Breast epithelium (tissue), 4 donors: ENCODE measurements at regions of chr12 and their contacts with region 1.

Region 1: GRCh38 chr12:17642340-17642650 is 447.7 kb downstream of the RERGL start:
- DNase-seq: no peak
- H3K4me3 ChIP-seq: no peak overlapping the region
- H3K27ac ChIP-seq: no peak overlapping the region
- H3K4me1 ChIP-seq: no peaks in the 10 kb centered on the region
- H3K27me3 ChIP-seq: no peaks in the 10 kb centered on the region
- CTCF ChIP-seq: no peak
- POLR2A ChIP-seq: no peak

Region 2: DNA sequence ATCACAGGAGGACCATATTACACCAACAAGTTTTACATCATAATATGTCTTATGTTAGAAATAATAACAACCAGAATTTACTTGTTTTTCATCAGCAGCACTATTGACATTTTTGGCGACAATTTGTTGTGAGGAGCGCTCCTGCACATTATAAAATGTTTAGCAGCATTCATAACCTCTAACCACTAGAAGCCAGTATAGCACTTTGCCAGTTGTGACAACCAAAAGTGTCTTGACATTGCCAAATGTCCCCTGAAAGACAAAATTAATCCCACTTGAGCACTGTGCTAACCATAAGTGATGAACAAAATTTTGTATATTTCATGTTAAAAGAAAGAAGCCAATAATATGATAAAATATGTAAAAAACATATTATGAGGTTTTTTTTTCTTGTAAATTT is 679.4 kb before region 1 on chr12:
- intact Hi-C with region 1: no loop called
- DNase-seq: no peak
- H3K4me3 ChIP-seq: no peak overlapping the region
- H3K27ac ChIP-seq: no peak overlapping the region
- H3K4me1 ChIP-seq: no peaks in the 10 kb centered on the region
- H3K27me3 ChIP-seq: no peaks in the 10 kb centered on the region
- CTCF ChIP-seq: no peak
- POLR2A ChIP-seq: no peak

Region 3: GRCh38 chr12:17214910-17215309 is 427.4 kb before region 1 on chr12:
- intact Hi-C with region 1: loop called (anchors 5 kb)
- DNase-seq: no peak
- H3K4me3 ChIP-seq: no peak overlapping the region
- H3K27ac ChIP-seq: no peak overlapping the region
- H3K4me1 ChIP-seq: no peaks in the 10 kb centered on the region
- H3K27me3 ChIP-seq: no peaks in the 10 kb centered on the region
- CTCF ChIP-seq: no peak
- POLR2A ChIP-seq: no peak